ENCODE measurements at regions of chr16 and their contacts with region 1.

Region 1: DNA sequence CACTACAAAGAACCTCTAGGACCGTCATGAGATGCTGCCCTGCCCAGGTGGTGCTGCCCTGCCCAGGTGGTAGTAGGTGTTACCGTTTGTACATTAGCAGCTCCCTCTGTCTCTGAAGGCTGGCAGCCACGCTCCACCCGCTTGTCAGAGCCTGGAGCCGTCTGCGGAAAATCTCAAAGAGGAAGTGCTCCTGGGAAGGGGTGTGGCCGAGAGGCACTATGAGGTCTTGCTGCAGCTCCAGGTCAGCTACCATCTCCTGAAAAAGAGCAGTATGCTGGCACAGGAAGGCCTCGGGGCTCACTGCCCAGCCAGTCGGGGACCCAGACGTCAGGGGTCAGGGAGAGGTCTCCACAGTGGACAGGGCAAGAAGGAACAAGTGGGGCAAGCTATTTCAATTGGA is 28.3 kb downstream of the ZNF276 start:
- DNase-seq: no peak
- CTCF ChIP-seq: no peak

Region 2: GRCh38 chr16:89720813-89721545 is 28.7 kb before region 1 on chr16 and contains the starts of genes VPS9D1 and ZNF276:
- CTCF ChIA-PET with region 1: no interaction called
- POLR2A ChIA-PET with region 1: no interaction called
- DNase-seq: peak; percentile 83
- CTCF ChIP-seq: no peak

Region 3: GRCh38 chr16:89764711-89765201 is 15.1 kb after region 1 on chr16:
- CTCF ChIA-PET with region 1: interaction called, 11 read pairs
- POLR2A ChIA-PET with region 1: no interaction called
- DNase-seq: peak; percentile 86
- CTCF ChIP-seq: no peak

Region 4: GRCh38 chr16:89999831-90000574 is 250.4 kb after region 1 on chr16:
- CTCF ChIA-PET with region 1: no interaction called
- POLR2A ChIA-PET with region 1: no interaction called
- DNase-seq: no peak
- CTCF ChIP-seq: no peak

Measured in GM10248 (cell line).